Kidney (tissue), 22 donors: ENCODE measurements at regions of chr20 and their contacts with region 1.

Region 1: GRCh38 chr20:561437-562231 is 18.0 kb upstream of the CSNK2A1 start:
- DNase-seq: peak in 4 of 5 donors; percentile 80 to 89 (median 82)
- H3K4me3 ChIP-seq: no peak overlapping the region
- H3K27ac ChIP-seq: no peak overlapping the region
- H3K4me1 ChIP-seq: no peaks in the 10 kb centered on the region
- H3K27me3 ChIP-seq: no peaks in the 10 kb centered on the region
- CTCF ChIP-seq: peak; percentile 99

Region 2: GRCh38 chr20:645318-646106 is 83.9 kb after region 1 on chr20:
- intact Hi-C with region 1: loop called (anchors 10 kb)
- DNase-seq: peak; percentile 79 to 91 (median 88)
- H3K4me3 ChIP-seq: no peak overlapping the region
- H3K27ac ChIP-seq: no peak overlapping the region
- H3K4me1 ChIP-seq: peaks cover 0 to 5% (median 4%) of the 10 kb centered on the region in 3 donors
- H3K27me3 ChIP-seq: no peaks in the 10 kb centered on the region
- CTCF ChIP-seq: peak; percentile 83

Region 3: DNA sequence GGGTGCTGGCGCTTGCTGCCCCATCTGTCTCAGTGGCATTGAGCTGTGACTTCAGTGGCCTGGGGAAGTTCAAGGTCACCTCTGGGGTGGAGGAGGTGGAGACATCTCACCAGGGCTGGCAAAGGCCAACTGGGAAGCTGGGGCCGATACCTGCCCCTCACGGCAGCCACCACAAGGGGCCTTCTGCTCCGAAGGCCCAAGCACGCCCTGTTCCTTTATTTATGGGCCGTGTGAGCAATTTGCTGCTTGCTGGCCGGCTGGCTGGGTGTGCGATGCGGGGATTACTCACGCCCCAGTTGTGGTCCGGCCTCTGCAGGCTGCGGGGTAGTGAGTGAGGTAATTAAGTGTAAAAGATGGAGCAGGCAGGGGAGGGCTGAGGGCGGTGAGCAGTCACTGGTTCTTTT is 127.2 kb after region 1 on chr20:
- intact Hi-C with region 1: no loop called
- DNase-seq: peak in 4 of 5 donors; percentile 35 to 61 (median 56)
- H3K4me3 ChIP-seq: no peak overlapping the region
- H3K27ac ChIP-seq: no peak overlapping the region
- H3K4me1 ChIP-seq: no peaks in the 10 kb centered on the region
- H3K27me3 ChIP-seq: no peaks in the 10 kb centered on the region
- CTCF ChIP-seq: no peak

Region 4: DNA sequence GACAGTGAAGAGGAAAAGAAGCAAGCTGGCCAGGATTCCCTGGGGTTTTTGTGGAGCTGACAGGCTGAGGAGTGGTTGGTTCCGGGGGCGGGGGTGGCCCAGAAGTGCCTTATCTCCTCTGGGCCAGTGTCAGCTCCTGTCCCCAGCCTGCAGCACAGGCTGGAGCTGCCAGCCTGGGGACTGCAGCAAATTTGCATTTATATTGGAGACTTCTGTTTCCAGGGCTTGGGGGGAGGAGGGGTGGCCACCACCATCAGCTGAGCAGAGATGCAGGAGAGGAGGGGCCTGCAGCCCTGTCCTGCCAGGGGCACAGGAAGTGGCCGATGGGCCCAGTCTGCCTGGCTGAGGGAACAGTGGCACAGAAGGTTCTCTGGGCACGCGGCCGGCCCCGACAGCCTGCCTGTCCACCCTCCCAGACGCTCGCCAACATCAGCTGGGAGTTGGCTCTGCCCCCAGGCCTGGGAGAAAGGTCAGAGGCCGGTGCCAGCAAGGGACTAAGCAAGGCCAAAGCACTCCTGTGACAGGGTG is 138.2 kb after region 1 on chr20:
- intact Hi-C with region 1: no loop called
- DNase-seq: peak in 4 of 5 donors; percentile 32 to 59 (median 38)
- H3K4me3 ChIP-seq: no peak overlapping the region
- H3K27ac ChIP-seq: no peak overlapping the region
- H3K4me1 ChIP-seq: no peaks in the 10 kb centered on the region
- H3K27me3 ChIP-seq: no peaks in the 10 kb centered on the region
- CTCF ChIP-seq: no peak

Region 5: GRCh38 chr20:733861-734260 is 172.2 kb after region 1 on chr20:
- intact Hi-C with region 1: loop called (anchors 10 kb)
- DNase-seq: peak in 1 of 5 donors; percentile 38
- H3K4me3 ChIP-seq: no peak overlapping the region
- H3K27ac ChIP-seq: no peak overlapping the region
- H3K4me1 ChIP-seq: no peaks in the 10 kb centered on the region
- H3K27me3 ChIP-seq: no peaks in the 10 kb centered on the region
- CTCF ChIP-seq: no peak

Region 6: DNA sequence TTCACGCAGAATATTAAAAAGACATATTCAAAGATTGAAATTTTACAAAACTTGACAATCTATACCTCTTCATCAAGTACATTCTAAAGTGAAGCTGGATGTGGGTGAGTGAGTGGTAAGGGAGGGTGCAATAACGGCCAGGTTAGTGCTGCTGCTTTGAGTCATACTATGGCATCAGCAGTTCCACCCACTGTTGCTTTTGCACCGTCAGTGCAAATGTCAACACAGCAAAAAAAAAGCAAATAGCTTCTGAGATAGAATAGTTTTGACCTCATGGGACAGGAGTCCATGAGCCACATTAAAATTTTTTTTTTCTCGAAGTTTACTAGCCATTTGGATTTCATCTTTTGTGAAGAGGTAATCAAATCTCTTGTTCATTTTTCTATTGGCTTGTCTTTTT is 588.6 kb after region 1 on chr20:
- intact Hi-C with region 1: no loop called
- DNase-seq: no peak
- H3K4me3 ChIP-seq: no peak overlapping the region
- H3K27ac ChIP-seq: no peak overlapping the region
- H3K4me1 ChIP-seq: no peaks in the 10 kb centered on the region
- H3K27me3 ChIP-seq: no peaks in the 10 kb centered on the region
- CTCF ChIP-seq: no peak